MCF 10A (cell line): ENCODE measurements at regions of chr3 and their contacts with region 1.

Region 1: DNA sequence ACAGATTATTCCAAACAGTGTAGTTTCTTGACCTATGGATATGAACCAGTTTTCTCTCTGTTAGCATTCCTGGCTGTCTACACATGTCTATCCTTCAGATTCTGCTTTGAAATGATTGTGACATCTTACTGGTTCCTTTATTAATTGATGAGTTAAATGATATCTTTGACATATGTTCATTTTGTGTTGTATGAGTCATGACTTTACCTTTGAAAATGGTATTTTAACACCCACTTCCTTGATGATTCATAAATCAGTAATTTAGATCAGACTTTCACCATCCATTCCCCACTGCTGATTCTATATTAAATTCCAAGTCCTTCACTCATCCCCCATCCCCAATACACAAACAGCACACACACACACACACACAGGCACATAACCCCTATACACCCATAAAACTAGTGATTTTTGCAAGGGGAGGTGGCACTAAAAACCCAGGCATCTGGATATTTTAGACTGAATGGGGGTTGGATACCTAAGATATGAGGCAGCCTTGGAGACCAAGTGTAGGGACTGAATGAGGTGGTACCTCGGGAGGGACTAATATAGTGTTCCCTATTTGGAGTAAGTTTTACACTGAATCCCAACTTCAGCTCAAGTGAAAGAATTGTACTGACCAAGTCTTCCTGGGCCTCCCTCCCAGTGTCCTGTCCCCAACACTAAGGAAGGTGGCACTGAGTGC is 9.7 kb downstream of the CCK start:
- DNase-seq: peak; percentile 58
- H3K4me3 Mint-ChIP-seq: peak overlapping the region; percentile 22
- H3K27ac Mint-ChIP-seq: peak overlapping the region; percentile 8
- H3K4me1 Mint-ChIP-seq: peaks cover 34% of the 10 kb centered on the region
- H3K27me3 Mint-ChIP-seq: no peaks in the 10 kb centered on the region
- CTCF ChIP-seq: no peak

Region 2: GRCh38 chr3:42300013-42300412 is 43.7 kb after region 1 on chr3:
- CTCF ChIA-PET with region 1: no interaction called
- POLR2A ChIA-PET with region 1: no interaction called
- intact Hi-C with region 1: loop called (anchors 5 kb)
- DNase-seq: peak; percentile 68
- H3K4me3 Mint-ChIP-seq: no peak overlapping the region
- H3K27ac Mint-ChIP-seq: no peak overlapping the region
- H3K4me1 Mint-ChIP-seq: no peaks in the 10 kb centered on the region
- H3K27me3 Mint-ChIP-seq: peaks cover 49% of the 10 kb centered on the region
- CTCF ChIP-seq: no peak

Region 3: DNA sequence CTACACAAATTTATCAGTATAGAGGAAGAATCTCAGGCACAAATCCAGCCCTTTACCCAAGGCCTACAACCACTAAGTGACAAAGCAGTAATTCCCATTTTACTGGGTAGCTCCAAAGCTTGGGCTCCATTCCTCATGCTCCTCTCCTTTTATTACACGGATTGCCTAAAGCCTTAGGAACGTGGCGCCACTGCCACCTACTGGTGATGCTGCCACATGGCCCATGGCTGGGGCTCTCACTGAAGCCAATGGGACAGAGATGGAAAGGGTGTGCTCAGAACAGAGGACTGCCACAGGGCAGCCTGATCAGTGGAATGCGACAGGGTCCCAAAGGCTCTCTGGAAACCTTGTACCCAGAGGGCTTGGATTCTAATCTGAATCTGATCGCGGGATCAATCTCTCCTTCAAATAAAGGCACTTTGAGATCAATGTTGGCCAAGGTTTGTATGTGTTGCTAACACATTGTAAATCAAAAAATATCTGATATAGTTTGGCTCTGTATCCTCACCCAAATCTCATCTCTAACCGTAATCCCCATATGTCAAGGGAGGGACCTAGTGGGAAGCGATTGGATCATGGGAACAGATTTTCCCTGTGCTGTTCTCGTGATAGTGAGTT is 187.7 kb after region 1 on chr3:
- CTCF ChIA-PET with region 1: interaction called, 166 read pairs
- POLR2A ChIA-PET with region 1: no interaction called
- intact Hi-C with region 1: no loop called
- DNase-seq: peak; percentile 83
- H3K4me3 Mint-ChIP-seq: no peak overlapping the region
- H3K27ac Mint-ChIP-seq: no peak overlapping the region
- H3K4me1 Mint-ChIP-seq: no peaks in the 10 kb centered on the region
- H3K27me3 Mint-ChIP-seq: peaks cover 11% of the 10 kb centered on the region
- CTCF ChIP-seq: peak; percentile 97